Heart right ventricle (tissue), 16 donors: ENCODE measurements at regions of chr6 and their contacts with region 1.

Region 1: GRCh38 chr6:5398530-5398929 is 137.2 kb downstream of the FARS2 start:
- DNase-seq: no peak
- ATAC-seq: peak in 1 of 8 donors; percentile 25
- H3K4me3 ChIP-seq: no peak overlapping the region
- H3K27ac ChIP-seq: no peak overlapping the region
- H3K4me1 ChIP-seq: peaks cover 0 to 9% (median 0%) of the 10 kb centered on the region in 9 donors
- H3K27me3 ChIP-seq: no peaks in the 10 kb centered on the region
- CTCF ChIP-seq: peak in 8 of 9 donors; percentile 23 to 63 (median 56)

Region 2: GRCh38 chr6:5061152-5061551 is 337.4 kb before region 1 on chr6:
- intact Hi-C with region 1: loop called in 3 of 10 experiments (anchors 10 kb)
- DNase-seq: no peak
- ATAC-seq: no peak
- H3K4me3 ChIP-seq: no peak overlapping the region
- H3K27ac ChIP-seq: no peak overlapping the region
- H3K4me1 ChIP-seq: no peaks in the 10 kb centered on the region
- H3K27me3 ChIP-seq: no peaks in the 10 kb centered on the region
- CTCF ChIP-seq: no peak

Region 3: GRCh38 chr6:5078121-5078669 is 320.3 kb before region 1 on chr6:
- intact Hi-C with region 1: loop called in 1 of 10 experiments (anchors 10 kb)
- DNase-seq: no peak
- ATAC-seq: peak in 3 of 8 donors; percentile 65 to 71 (median 65)
- H3K4me3 ChIP-seq: no peak overlapping the region
- H3K27ac ChIP-seq: no peak overlapping the region
- H3K4me1 ChIP-seq: peaks cover 0 to 4% (median 0%) of the 10 kb centered on the region in 9 donors
- H3K27me3 ChIP-seq: no peaks in the 10 kb centered on the region
- CTCF ChIP-seq: peak in 7 of 9 donors; percentile 18 to 53 (median 33)

Region 4: DNA sequence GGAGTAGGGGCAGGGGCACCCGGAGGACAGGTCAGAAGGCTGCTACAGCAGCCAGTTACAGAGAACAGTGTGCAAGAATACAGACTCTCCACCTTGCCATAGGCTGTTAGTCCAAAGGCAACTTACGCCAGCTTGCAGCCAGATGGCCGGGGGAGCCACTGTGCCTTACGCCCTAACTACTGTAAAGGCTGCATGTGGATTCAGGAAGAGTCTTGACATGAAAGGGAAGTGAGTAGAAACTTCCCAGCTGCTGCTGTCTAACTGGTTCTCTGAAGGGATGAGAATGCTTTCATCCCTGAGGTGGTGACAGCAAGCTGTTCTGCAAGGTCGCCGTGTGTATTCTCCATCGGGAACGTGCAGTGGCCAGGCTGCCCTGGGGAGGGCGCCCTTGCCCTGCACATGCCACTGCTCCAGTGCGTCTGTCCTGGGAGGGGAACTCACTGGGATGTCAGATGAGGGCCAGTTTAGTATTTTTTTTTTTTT is 183.9 kb before region 1 on chr6:
- intact Hi-C with region 1: loop called in 4 of 10 experiments (anchors 2 to 10 kb)
- DNase-seq: peak; percentile 34 to 60
- ATAC-seq: peak; percentile 84 to 95 (median 92)
- H3K4me3 ChIP-seq: no peak overlapping the region
- H3K27ac ChIP-seq: peak overlapping the region in 6 of 10 donors; percentile 7 to 38 (median 30)
- H3K4me1 ChIP-seq: peaks cover 0 to 48% (median 16%) of the 10 kb centered on the region in 9 donors
- H3K27me3 ChIP-seq: no peaks in the 10 kb centered on the region
- CTCF ChIP-seq: peak; percentile 37 to 79 (median 70)

Region 5: GRCh38 chr6:5260661-5261544 is 137.6 kb before region 1 on chr6 and contains the starts of genes FARS2 and LYRM4:
- intact Hi-C with region 1: loop called in 1 of 10 experiments (anchors 10 kb)
- DNase-seq: peak; percentile 89 to 90
- ATAC-seq: peak; percentile 97 to 99 (median 98)
- H3K4me3 ChIP-seq: peak within 1 kb of the TSS; percentile 62 to 96 (median 84)
- H3K27ac ChIP-seq: peak within 1 kb of the TSS; percentile 92 to 100 (median 99)
- H3K4me1 ChIP-seq: peaks cover 0 to 27% (median 22%) of the 10 kb centered on the region in 9 donors
- H3K27me3 ChIP-seq: no peaks in the 10 kb centered on the region
- CTCF ChIP-seq: peak in 3 of 9 donors; percentile 34 to 67 (median 47)
- total RNA-seq, gene FARS2: 17.9 to 22.4 (median 21.4) TPM
- total RNA-seq, gene LYRM4: 20.9 to 33.0 (median 25.1) TPM